ENCODE measurements at regions of chr20 and their contacts with region 1.

Region 1: GRCh38 chr20:44187051-44187762 is at the start of gene JPH2:
- DNase-seq: peak; percentile 33 to 86
- H3K4me3 ChIP-seq: peak within 1 kb of the TSS; percentile 1
- CTCF ChIP-seq: no peak
- POLR2A ChIP-seq: no peak
- total RNA-seq, gene JPH2: 1.5 to 10.9 (median 5.6) TPM

Region 2: DNA sequence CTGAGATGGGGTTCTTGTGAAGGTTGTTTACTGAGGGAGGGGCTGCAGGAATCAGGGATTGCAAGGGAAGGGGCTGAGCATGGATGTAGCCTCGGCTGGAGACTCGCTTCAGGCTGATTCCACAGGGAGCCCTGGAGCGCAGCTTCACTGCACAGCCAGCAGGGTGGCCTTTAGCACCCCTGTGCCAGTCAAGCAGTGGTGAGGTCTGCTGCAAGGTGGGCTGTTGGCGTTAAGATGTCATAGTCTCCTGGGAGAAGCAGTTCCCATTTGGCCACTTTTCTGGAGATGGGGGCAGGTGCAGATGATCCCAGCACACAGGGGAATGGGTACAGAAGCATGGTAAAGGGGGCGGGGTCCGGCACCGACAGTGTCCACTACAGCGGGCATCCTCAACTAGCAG is 146.2 kb before region 1 on chr20:
- intact Hi-C with region 1: no loop called
- DNase-seq: peak; percentile 2 to 70
- H3K4me3 ChIP-seq: no peak overlapping the region
- CTCF ChIP-seq: no peak
- POLR2A ChIP-seq: no peak

Region 3: DNA sequence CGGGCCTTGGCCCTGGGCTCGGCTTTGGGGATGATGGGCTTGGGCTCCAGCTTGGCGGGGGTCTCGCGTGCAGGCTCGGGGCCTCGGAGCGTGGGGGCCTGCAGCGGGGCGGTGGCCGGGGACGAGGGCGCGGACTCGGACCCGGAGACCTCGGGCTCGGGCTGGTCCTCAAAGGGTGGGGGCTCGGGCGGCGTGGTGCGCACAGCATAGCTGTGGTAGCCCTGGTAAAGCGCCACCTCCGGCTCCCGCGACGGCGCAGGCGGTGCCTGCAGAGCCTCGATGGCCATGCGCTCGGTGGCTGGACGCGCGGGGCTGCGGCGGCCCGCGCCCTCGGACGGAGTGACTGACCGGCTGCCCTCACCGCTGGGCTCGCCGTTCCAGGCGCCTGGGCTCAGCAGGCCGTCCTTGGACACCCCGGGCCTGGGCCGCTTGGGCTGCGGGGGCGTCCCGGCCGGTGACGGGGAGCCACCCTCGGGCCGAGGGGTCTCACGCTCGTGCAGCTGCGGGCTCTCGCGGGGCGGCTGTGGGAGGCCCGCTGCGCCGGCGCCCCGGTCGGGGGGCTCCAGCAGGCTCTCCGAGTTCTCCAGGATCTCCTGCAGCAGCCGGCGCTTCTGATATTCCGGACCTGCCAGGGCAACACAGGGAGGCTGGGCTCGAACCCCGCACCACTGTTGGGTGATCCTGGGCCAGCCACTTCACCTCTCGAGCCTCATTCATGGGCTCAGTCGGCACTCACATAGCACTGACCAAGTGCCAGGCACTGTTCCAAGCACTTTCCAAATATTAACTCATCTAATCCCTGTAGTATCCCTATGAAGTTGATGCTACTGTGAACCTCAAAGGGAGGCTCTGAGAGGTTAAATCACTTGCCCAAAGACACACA is 71.2 kb before region 1 on chr20:
- intact Hi-C with region 1: loop called (anchors 1 kb)
- DNase-seq: peak in 1 of 2 donors; percentile 81
- H3K4me3 ChIP-seq: no peak overlapping the region
- CTCF ChIP-seq: no peak
- POLR2A ChIP-seq: no peak

Region 4: DNA sequence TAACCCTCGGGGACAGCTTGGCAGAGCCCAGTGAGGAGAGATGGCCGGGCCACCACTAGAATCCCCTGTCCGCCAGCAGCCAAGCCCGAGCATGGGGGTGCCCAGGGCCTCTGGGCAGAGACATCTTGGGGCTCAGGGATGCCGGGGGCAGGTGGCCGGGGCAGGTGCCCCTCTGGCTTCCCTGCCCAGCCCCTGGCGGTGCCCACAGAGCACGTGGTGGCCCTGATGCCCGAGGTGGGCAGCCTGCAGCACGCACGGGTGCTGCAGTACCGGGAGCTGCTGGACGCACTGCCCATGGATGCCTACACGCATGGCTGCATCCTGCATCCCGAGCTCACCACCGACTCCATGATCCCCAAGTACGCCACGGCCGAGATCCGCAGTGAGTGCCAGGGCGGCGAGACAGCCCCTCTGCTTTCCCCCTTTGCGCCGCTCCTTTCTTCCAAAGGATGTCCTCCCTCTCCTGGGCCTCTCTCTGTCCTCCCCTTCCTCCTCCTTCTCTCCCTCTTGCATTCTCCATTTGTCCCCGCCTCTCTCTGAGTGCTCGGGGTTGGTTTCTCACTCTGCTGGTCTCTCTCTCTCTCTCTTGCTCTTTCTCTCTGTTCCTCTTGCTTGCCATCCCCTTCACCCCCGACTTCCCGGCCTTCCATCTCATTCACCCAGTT is 71.2 kb after region 1 on chr20:
- intact Hi-C with region 1: loop called (anchors 2 kb)
- DNase-seq: no peak
- H3K4me3 ChIP-seq: no peak overlapping the region
- CTCF ChIP-seq: no peak
- POLR2A ChIP-seq: no peak

Measured in lower leg skin (tissue), 4 donors.